ENCODE measurements at regions of chrX and their contacts with region 1.

Region 1: GRCh38 chrX:40266490-40267333 is 169.0 kb upstream of the BCOR start:
- DNase-seq: peak; percentile 80
- ATAC-seq: peak; percentile 95

Region 2: GRCh38 chrX:40468033-40468846 is 201.5 kb after region 1 on chrX:
- intact Hi-C with region 1: loop called (anchors 10 kb)
- DNase-seq: peak; percentile 52
- ATAC-seq: peak; percentile 94

Region 3: GRCh38 chrX:40504801-40505605 is 238.3 kb after region 1 on chrX:
- intact Hi-C with region 1: no loop called
- DNase-seq: no peak
- ATAC-seq: no peak